IMR-90 (cell line): ENCODE measurements at regions of chr5 and their contacts with region 1.

Region 1: GRCh38 chr5:124557761-124558160 is 188.7 kb downstream of the ZNF608 start:
- DNase-seq: no peak
- ATAC-seq: no peak
- H3K4me3 ChIP-seq: no peak overlapping the region
- H3K27ac ChIP-seq: no peak overlapping the region
- H3K4me1 ChIP-seq: no peaks in the 10 kb centered on the region
- H3K27me3 ChIP-seq: no peaks in the 10 kb centered on the region
- CTCF ChIP-seq: no peak
- POLR2A ChIP-seq: no peak
- RAD21 ChIP-seq: no peak

Region 2: DNA sequence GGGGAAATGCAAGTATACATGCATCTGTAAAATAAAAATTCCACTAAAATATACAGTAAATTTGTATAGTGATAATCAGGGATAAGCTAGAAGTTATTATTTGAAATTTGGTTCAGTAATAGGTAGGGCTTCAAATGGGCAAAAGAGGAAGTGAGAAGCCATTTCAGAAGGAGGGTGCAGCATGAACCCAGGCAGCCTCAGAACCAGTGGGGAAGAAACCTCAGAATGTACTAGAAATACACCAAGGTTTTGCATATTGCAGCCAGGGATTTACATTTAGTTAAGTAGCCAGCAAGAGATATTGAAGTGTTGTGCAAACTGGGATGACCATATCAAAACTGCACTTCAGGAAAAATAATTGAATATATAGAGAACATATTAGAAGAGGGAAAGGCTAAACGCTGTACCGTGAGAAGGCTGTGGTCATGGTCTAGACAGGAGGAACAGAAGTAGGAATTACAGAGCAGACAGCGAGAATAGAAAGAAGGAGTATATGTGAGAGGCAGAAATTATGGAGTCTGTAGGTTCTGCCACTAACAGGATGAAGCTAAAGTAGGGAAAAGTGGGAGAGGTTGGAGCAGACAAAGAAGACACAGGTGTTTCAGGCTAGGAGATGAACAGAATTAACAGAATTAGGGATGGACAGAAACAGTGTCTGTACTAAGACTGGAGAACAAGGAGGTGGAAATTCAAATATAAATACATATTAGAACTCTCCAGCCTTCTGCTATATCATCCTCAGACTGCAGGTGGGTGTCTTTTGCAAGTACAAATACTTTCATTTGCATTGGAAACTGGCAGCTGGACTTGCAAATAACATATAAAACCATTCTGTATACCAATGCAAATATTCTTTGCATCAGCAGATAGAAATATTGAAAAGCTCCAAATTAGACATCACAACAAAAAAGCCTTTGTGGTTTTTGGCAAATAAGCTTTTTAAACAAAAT is 146.9 kb before region 1 on chr5:
- CTCF ChIA-PET with region 1: no interaction called
- POLR2A ChIA-PET with region 1: no interaction called
- dilution Hi-C with region 1: no loop called
- in situ Hi-C with region 1: no loop called
- intact Hi-C with region 1: no loop called
- DNase-seq: peak; percentile 44
- ATAC-seq: no peak
- H3K4me3 ChIP-seq: no peak overlapping the region
- H3K27ac ChIP-seq: no peak overlapping the region
- H3K4me1 ChIP-seq: no peaks in the 10 kb centered on the region
- H3K27me3 ChIP-seq: no peaks in the 10 kb centered on the region; the same call in 1 of the 2 replicates
- CTCF ChIP-seq: peak; percentile 25; the same call in 1 of the 2 replicates
- POLR2A ChIP-seq: no peak
- RAD21 ChIP-seq: no peak; the same call in 1 of the 2 replicates

Region 3: DNA sequence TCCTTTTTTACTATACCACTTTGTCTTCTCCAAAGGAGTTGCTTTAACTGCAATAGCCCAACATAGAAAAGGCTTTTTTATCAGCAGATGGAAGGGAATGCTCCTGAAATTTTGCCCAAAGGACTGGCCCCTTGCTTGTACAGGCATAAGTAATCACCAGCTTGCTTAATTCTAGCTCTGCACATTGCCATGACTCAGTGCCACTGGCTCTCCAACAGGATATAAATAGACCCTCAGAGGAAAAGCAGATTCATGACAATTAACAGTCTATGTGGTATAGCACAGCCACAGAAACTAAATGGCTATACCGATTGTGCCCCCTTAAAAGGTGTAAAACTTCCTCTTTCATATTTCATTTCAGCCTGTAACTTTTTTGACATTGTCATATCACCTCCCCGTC is 38.4 kb before region 1 on chr5:
- CTCF ChIA-PET with region 1: no interaction called
- POLR2A ChIA-PET with region 1: no interaction called
- dilution Hi-C with region 1: no loop called
- in situ Hi-C with region 1: no loop called
- intact Hi-C with region 1: loop called (anchors 1 kb)
- DNase-seq: peak; percentile 86
- ATAC-seq: peak; percentile 85
- H3K4me3 ChIP-seq: no peak overlapping the region
- H3K27ac ChIP-seq: no peak overlapping the region
- H3K4me1 ChIP-seq: peaks cover 5% of the 10 kb centered on the region
- H3K27me3 ChIP-seq: peaks cover under 1% of the 10 kb centered on the region
- CTCF ChIP-seq: no peak
- POLR2A ChIP-seq: no peak
- RAD21 ChIP-seq: no peak